ENCODE measurements at regions of chr14 and their contacts with region 1.

Region 1: DNA sequence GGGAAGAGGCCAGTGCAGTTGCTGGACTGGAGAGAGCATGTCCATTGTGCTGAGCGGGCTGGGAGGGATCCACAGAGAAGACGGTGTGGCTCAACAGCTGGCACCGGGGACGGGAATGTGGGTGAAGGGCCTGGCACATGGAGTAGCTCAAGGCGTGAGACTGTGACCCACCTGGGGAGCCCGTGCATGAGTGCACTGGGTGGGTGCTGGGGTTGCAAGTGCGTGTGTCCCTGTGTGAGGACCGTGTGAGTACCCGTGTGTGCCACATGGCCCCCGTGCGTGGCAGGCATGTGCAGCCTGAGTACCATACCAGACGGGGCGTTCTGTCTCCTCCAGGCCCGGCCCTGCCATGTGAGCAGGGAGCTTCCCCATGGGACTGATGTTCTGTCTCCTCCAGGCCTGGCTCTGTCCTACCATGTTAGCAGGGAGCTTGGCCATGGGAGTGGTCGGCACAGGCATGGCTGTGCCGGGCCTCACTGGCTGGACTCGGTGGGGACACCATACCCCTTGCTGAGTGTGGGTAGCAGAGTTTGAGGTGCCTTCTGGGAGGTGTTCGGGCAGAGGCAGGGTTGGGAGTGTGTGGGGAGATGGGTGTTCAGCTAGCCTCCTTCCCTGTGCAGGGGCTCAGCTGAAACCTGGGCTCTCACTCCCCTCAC is 234.4 kb downstream of the TMEM121 start:
- DNase-seq: no peak
- H3K4me3 ChIP-seq: no peak overlapping the region
- H3K4me1 ChIP-seq: no peaks in the 10 kb centered on the region
- H3K27me3 ChIP-seq: no peaks in the 10 kb centered on the region

Region 2: GRCh38 chr14:105617201-105617777 is 143.5 kb before region 1 on chr14:
- in situ Hi-C with region 1: loop called (anchors 10 kb)
- DNase-seq: no peak
- H3K4me3 ChIP-seq: no peak overlapping the region
- H3K4me1 ChIP-seq: no peaks in the 10 kb centered on the region
- H3K27me3 ChIP-seq: 0 out of 2 replicates have a peak, but pooled peaks cover 3% of the 10 kb centered on the region

Region 3: GRCh38 chr14:106107703-106108102 is 346.9 kb after region 1 on chr14:
- in situ Hi-C with region 1: no loop called
- DNase-seq: no peak
- H3K4me3 ChIP-seq: no peak overlapping the region
- H3K4me1 ChIP-seq: no peaks in the 10 kb centered on the region
- H3K27me3 ChIP-seq: no peaks in the 10 kb centered on the region